Lower leg skin (tissue), 4 donors: ENCODE measurements at regions of chr14 and their contacts with region 1.

Region 1: GRCh38 chr14:65222440-65222858 is 120.1 kb upstream of the MAX start:
- DNase-seq: no peak
- H3K4me3 ChIP-seq: no peak overlapping the region
- CTCF ChIP-seq: no peak
- POLR2A ChIP-seq: no peak

Region 2: GRCh38 chr14:65403231-65403630 is 180.8 kb after region 1 on chr14:
- intact Hi-C with region 1: loop called (anchors 10 kb)
- DNase-seq: no peak
- H3K4me3 ChIP-seq: no peak overlapping the region
- CTCF ChIP-seq: no peak
- POLR2A ChIP-seq: no peak